ENCODE measurements at regions of chr15 and their contacts with region 1.

Region 1: DNA sequence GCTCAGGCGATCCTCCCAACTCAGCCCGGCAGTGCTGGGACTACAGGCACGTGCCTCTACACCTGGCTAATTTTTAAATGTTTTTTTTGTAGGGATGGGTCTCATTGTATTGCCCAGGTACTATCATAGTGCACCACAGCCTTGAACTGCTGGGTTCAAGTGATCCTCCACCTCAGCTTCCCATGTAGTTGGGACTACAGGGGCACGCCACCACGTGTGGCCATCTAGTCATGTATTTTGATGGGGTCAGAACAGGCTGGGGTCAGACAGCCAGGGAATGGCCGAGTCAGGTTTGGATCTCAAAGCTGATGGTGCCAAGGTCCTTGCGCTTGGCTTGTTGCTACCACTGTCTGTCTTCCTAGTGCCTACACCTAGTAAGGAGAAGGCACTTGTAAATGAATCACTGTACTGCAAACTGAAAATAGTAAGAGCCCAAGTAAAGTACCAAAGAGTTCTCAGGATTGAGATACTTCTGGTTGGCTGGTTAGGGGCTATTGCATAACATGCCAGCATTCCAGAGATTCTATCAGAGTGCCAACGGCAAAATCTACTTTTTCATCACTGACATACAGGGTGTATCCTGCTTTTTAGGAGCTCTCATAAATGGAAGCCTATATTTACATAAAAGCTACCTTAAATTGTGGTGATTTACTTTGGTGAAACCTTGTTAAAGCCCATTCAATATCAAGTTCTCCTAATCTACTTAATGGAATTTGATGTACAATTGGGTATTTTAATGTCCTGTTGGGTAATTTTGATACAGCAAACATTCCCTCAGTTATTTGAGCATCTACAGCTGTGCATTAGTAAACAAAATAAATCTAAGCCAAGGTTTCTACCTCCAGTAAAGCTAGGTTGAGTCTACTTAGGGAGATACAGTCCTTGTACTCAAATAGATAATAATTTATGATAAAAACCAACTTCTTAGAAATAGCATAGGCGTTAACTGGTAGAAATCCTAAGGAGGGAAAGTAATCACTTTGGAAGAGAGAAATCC is 30.8 kb upstream of the CHD2 start:
- DNase-seq: no peak
- H3K4me3 ChIP-seq: no peak overlapping the region
- H3K27ac ChIP-seq: peak overlapping the region; percentile 1 to 71 (median 52)
- H3K4me1 ChIP-seq: peaks cover 0 to 14% (median 2%) of the 10 kb centered on the region in 4 donors
- H3K27me3 ChIP-seq: no peaks in the 10 kb centered on the region
- CTCF ChIP-seq: no peak
- EP300 ChIP-seq: no peak
- POLR2A ChIP-seq: no peak

Region 2: DNA sequence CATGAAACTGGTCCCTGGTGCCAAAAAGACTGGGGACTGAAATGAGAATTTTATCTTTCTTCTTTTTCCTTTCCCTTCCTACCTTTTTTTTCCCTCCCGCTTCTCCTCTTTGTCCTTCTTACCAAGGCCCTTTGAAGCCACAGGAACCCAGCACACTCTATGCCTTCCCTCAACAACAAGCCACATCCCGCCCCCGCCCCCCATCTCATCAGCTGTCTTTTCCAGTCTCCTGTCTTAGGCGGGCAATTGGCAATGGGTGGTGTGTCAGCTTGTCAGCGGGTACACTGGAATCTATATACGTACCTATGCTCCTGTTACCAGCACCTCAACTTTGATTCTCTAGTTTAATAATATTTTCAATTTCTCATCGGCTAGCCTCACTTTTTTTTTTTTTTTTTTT is 25.5 kb before region 1 on chr15:
- in situ Hi-C with region 1: no loop called
- intact Hi-C with region 1: loop called (anchors 1 kb)
- DNase-seq: no peak
- H3K4me3 ChIP-seq: no peak overlapping the region
- H3K27ac ChIP-seq: peak overlapping the region in 3 of 4 donors; percentile 30 to 87 (median 86)
- H3K4me1 ChIP-seq: peaks cover 0 to 34% (median 22%) of the 10 kb centered on the region in 4 donors
- H3K27me3 ChIP-seq: no peaks in the 10 kb centered on the region
- CTCF ChIP-seq: no peak
- EP300 ChIP-seq: no peak
- POLR2A ChIP-seq: no peak